ENCODE measurements at regions of chr19 and their contacts with region 1.

Region 1: GRCh38 chr19:12666265-12667048 is at the starts of genes MAN2B1 and WDR83:
- DNase-seq: peak; percentile 49 to 92 (median 71)
- ATAC-seq: peak; percentile 69
- H3K4me3 ChIP-seq: peak within 1 kb of the TSS; percentile 94
- H3K4me3 Mint-ChIP-seq: peak within 1 kb of the TSS; percentile 92
- H3K27ac ChIP-seq: peak within 1 kb of the TSS; percentile 82 to 85
- H3K27ac Mint-ChIP-seq: peak within 1 kb of the TSS; percentile 98
- H3K4me1 ChIP-seq: peaks cover 66% of the 10 kb centered on the region
- H3K4me1 Mint-ChIP-seq: peaks cover 48% of the 10 kb centered on the region
- H3K27me3 ChIP-seq: no peaks in the 10 kb centered on the region
- H3K27me3 Mint-ChIP-seq: no peaks in the 10 kb centered on the region
- CTCF ChIP-seq: no peak
- total RNA-seq, gene MAN2B1: 95.9 to 109 TPM
- total RNA-seq, gene WDR83: 6.5 to 6.6 TPM

Region 2: GRCh38 chr19:12202250-12202649 is 464.2 kb before region 1 on chr19:
- CTCF ChIA-PET with region 1: no interaction called
- POLR2A ChIA-PET with region 1: no interaction called
- intact Hi-C with region 1: loop called in 1 of 2 experiments (anchors 5 kb)
- DNase-seq: peak; percentile 44 to 79 (median 60)
- ATAC-seq: peak; percentile 91
- H3K4me3 ChIP-seq: no peak overlapping the region
- H3K4me3 Mint-ChIP-seq: peak overlapping the region; percentile 49
- H3K27ac ChIP-seq: no peak overlapping the region
- H3K27ac Mint-ChIP-seq: peak overlapping the region; percentile 51
- H3K4me1 ChIP-seq: peaks cover 15% of the 10 kb centered on the region
- H3K4me1 Mint-ChIP-seq: peaks cover 47% of the 10 kb centered on the region
- H3K27me3 ChIP-seq: no peaks in the 10 kb centered on the region
- H3K27me3 Mint-ChIP-seq: no peaks in the 10 kb centered on the region
- CTCF ChIP-seq: peak; percentile 71

Region 3: DNA sequence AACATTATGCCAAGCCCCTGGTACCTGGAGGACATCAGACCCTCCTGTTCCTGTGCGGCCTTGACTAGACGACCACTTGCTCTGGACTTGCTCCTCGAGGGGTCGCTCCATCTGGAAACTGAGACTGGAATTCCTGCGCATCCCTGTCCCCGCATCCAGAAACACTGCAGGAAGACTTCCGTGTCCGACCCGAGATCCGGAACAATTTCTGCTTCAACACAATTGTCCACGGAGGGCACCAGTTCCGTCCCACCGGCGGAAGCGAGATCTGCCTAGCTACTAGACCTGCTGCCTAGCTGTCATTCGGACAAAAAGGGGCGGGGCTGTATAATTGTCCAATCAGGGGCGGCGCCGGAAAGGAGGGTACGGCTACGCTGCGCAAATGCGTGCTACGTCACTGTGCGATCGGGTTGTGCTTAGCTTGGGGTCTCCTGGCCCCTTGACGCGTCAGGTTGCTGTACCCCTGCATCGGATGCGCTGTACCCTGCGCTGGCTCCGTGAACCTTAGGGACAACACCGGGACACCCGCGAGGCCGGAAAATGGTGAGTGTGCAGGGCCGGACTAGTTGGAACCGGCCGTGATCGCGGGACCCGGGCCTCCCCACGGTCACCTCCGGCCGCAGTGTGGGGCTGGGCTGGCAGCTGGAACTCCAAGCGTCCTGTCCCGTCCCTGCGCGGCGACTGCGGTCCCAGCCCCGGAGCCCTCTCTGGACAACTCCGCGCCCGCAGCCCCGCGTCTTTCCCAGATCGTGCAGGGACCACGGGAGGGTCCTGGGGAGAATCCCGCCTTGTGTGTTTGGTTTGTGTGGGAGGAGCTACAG is 55.7 kb before region 1 on chr19 and contains the starts of genes ZNF490 and ZNF791:
- CTCF ChIA-PET with region 1: interaction called, 8 read pairs
- POLR2A ChIA-PET with region 1: interaction called, 15 read pairs
- intact Hi-C with region 1: loop called (anchors 1 to 2 kb)
- DNase-seq: peak; percentile 92 to 99 (median 96)
- ATAC-seq: peak; percentile 76
- H3K4me3 ChIP-seq: peak within 1 kb of the TSS; percentile 99
- H3K4me3 Mint-ChIP-seq: peak within 1 kb of the TSS; percentile 100
- H3K27ac ChIP-seq: peak within 1 kb of the TSS; percentile 85 to 88
- H3K27ac Mint-ChIP-seq: peak within 1 kb of the TSS; percentile 100
- H3K4me1 ChIP-seq: peaks cover 45% of the 10 kb centered on the region
- H3K4me1 Mint-ChIP-seq: peaks cover 40% of the 10 kb centered on the region
- H3K27me3 ChIP-seq: no peaks in the 10 kb centered on the region
- H3K27me3 Mint-ChIP-seq: no peaks in the 10 kb centered on the region
- CTCF ChIP-seq: no peak
- total RNA-seq, gene ZNF490: 6.2 to 7.1 TPM
- total RNA-seq, gene ZNF791: 102 to 103 TPM

Region 4: GRCh38 chr19:12639901-12640613 is 26.4 kb before region 1 on chr19:
- CTCF ChIA-PET with region 1: interaction called, 16 read pairs
- POLR2A ChIA-PET with region 1: interaction called, 5 read pairs
- intact Hi-C with region 1: loop called in 1 of 2 experiments (anchors 2 kb)
- DNase-seq: peak; percentile 72 to 92 (median 80)
- ATAC-seq: peak; percentile 72
- H3K4me3 ChIP-seq: peak overlapping the region; percentile 22
- H3K4me3 Mint-ChIP-seq: peak overlapping the region; percentile 55
- H3K27ac ChIP-seq: no peak overlapping the region
- H3K27ac Mint-ChIP-seq: peak overlapping the region; percentile 71
- H3K4me1 ChIP-seq: peaks cover 16% of the 10 kb centered on the region
- H3K4me1 Mint-ChIP-seq: peaks cover 22% of the 10 kb centered on the region
- H3K27me3 ChIP-seq: no peaks in the 10 kb centered on the region
- H3K27me3 Mint-ChIP-seq: no peaks in the 10 kb centered on the region
- CTCF ChIP-seq: peak; percentile 97

Measured in CD4-positive, alpha-beta T cell (primary cell).